ENCODE measurements at regions of chr1 and their contacts with region 1.

Region 1: DNA sequence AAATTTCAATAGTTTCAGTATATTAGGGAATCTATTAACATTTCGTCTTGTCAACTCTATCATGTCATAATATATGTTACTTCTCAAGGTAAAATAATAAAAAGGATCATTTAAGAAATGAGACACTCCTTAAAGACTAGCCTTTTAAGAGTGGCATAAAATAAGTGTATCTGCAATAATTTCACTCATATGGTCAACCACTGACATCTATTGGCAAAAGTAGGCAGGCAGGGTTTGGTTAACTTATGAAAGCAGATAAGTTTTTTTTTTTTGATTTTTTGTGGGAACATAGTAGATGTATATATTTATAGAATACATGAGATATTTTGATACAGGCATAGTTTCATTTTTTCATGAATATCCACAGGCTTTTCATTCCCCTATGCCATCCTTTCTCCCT is 5.5 kb upstream of the RGS21 start:
- DNase-seq: peak; percentile 80
- ATAC-seq: peak; percentile 78
- H3K4me3 ChIP-seq: no peak overlapping the region
- H3K27ac ChIP-seq: no peak overlapping the region
- H3K4me1 ChIP-seq: no peaks in the 10 kb centered on the region
- H3K27me3 ChIP-seq: no peaks in the 10 kb centered on the region
- CTCF ChIP-seq: peak; percentile 90
- POLR2A ChIP-seq: no peak
- RAD21 ChIP-seq: peak; percentile 85

Region 2: GRCh38 chr1:190453550-190453949 is 1857.7 kb before region 1 on chr1:
- CTCF ChIA-PET with region 1: no interaction called
- POLR2A ChIA-PET with region 1: no interaction called
- dilution Hi-C with region 1: no loop called
- in situ Hi-C with region 1: no loop called
- intact Hi-C with region 1: loop called (anchors 10 kb)
- DNase-seq: peak; percentile 5
- ATAC-seq: peak; percentile 49; the same call in 1 of the 2 replicates
- H3K4me3 ChIP-seq: no peak overlapping the region
- H3K27ac ChIP-seq: no peak overlapping the region
- H3K4me1 ChIP-seq: no peaks in the 10 kb centered on the region
- H3K27me3 ChIP-seq: no peaks in the 10 kb centered on the region
- CTCF ChIP-seq: peak; percentile 20; the same call in 1 of the 2 replicates
- POLR2A ChIP-seq: no peak
- RAD21 ChIP-seq: no peak

Region 3: GRCh38 chr1:190957570-190957969 is 1353.7 kb before region 1 on chr1:
- CTCF ChIA-PET with region 1: no interaction called
- POLR2A ChIA-PET with region 1: no interaction called
- dilution Hi-C with region 1: no loop called
- in situ Hi-C with region 1: loop called (anchors 25 kb)
- intact Hi-C with region 1: loop called (anchors 10 kb)
- DNase-seq: peak; percentile 6
- ATAC-seq: no peak
- H3K4me3 ChIP-seq: no peak overlapping the region
- H3K27ac ChIP-seq: no peak overlapping the region
- H3K4me1 ChIP-seq: no peaks in the 10 kb centered on the region
- H3K27me3 ChIP-seq: no peaks in the 10 kb centered on the region
- CTCF ChIP-seq: 0 out of 2 replicates have a peak, but pooled peaks have one; percentile 15
- POLR2A ChIP-seq: no peak
- RAD21 ChIP-seq: peak; percentile 11; the same call in 1 of the 2 replicates

Region 4: DNA sequence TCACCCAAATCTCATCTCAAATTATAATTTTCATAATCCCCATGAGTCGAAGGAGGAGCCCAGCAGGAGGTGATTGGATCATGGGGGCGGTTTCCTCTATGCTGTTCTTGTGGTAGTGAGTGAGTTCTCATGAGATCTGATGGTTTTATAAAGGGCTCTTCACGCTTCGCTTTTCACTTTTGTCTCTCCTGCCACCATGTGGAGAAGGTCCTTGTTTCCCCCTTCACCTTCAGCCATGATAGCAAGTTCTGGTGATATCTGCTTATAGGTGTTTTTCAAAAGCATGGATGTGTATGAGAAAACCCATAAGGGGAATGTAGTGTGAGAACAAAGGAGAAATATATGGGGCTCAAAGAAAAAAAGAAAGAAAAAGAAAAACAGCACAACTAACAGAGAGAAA is 558.9 kb before region 1 on chr1:
- CTCF ChIA-PET with region 1: no interaction called
- POLR2A ChIA-PET with region 1: no interaction called
- dilution Hi-C with region 1: no loop called
- in situ Hi-C with region 1: no loop called
- intact Hi-C with region 1: loop called (anchors 10 kb)
- DNase-seq: no peak
- ATAC-seq: no peak
- H3K4me3 ChIP-seq: no peak overlapping the region
- H3K27ac ChIP-seq: no peak overlapping the region
- H3K4me1 ChIP-seq: no peaks in the 10 kb centered on the region
- H3K27me3 ChIP-seq: no peaks in the 10 kb centered on the region
- CTCF ChIP-seq: no peak
- POLR2A ChIP-seq: no peak
- RAD21 ChIP-seq: no peak

Region 5: GRCh38 chr1:191993549-191993948 is 317.7 kb before region 1 on chr1:
- CTCF ChIA-PET with region 1: interaction called, 4 read pairs
- POLR2A ChIA-PET with region 1: no interaction called
- dilution Hi-C with region 1: no loop called
- in situ Hi-C with region 1: loop called (anchors 5 kb)
- intact Hi-C with region 1: loop called (anchors 1 kb)
- DNase-seq: peak; percentile 61
- ATAC-seq: peak; percentile 72
- H3K4me3 ChIP-seq: no peak overlapping the region
- H3K27ac ChIP-seq: no peak overlapping the region
- H3K4me1 ChIP-seq: no peaks in the 10 kb centered on the region; the same call in 1 of the 2 replicates
- H3K27me3 ChIP-seq: no peaks in the 10 kb centered on the region
- CTCF ChIP-seq: peak; percentile 62
- POLR2A ChIP-seq: no peak
- RAD21 ChIP-seq: peak; percentile 79

Region 6: DNA sequence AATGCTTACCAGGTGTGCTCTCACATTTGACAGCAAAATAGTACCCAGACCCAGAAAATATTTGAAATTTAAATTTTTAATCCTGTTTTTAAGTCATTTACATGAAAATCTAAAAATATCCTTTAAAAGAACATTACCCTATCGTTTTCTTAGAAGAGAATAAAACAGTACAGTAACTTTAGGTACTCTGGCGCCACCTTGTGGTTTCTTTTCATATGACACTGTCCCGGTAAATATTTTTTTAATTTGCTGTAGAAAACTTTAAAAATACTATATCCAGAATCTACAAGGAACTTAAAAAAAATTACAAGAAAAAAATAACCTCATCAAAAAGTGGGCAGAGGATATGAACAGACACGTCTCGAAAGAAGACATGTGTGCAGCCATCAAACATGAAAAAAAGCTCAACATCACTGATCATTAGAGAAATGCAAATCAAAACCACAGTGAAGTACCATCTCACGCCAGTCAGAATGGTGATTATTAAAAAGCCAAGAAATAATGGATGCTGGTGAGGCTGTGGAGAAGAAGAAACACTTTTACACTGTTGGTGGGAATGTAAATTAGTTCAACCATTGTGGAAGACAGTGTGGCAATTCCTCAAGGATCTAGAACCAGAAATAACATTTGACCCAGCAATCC is 134.7 kb after region 1 on chr1:
- CTCF ChIA-PET with region 1: no interaction called
- POLR2A ChIA-PET with region 1: no interaction called
- dilution Hi-C with region 1: no loop called
- in situ Hi-C with region 1: no loop called
- intact Hi-C with region 1: loop called (anchors 1 kb)
- DNase-seq: peak; percentile 60
- ATAC-seq: peak; percentile 69
- H3K4me3 ChIP-seq: no peak overlapping the region
- H3K27ac ChIP-seq: peak overlapping the region; percentile 40; the same call in 1 of the 2 replicates
- H3K4me1 ChIP-seq: peaks cover 10% of the 10 kb centered on the region
- H3K27me3 ChIP-seq: no peaks in the 10 kb centered on the region
- CTCF ChIP-seq: peak; percentile 87
- POLR2A ChIP-seq: no peak
- RAD21 ChIP-seq: peak; percentile 83

Measured in IMR-90 (cell line).